ENCODE measurements at regions of chr12 and their contacts with region 1.

Region 1: GRCh38 chr12:31959161-31959700 is at the start of gene RESF1:
- DNase-seq: peak; percentile 90
- ATAC-seq: peak; percentile 82
- H3K4me3 Mint-ChIP-seq: peak within 1 kb of the TSS; percentile 88
- H3K27ac Mint-ChIP-seq: peak within 1 kb of the TSS; percentile 98
- H3K4me1 Mint-ChIP-seq: peaks cover 57% of the 10 kb centered on the region
- H3K27me3 Mint-ChIP-seq: no peaks in the 10 kb centered on the region
- CTCF ChIP-seq: no peak
- total RNA-seq, gene RESF1: 70.8 to 83.3 TPM

Region 2: GRCh38 chr12:31325877-31326631 is 633.2 kb before region 1 on chr12 and contains the start of gene SINHCAF:
- CTCF ChIA-PET with region 1: no interaction called
- POLR2A ChIA-PET with region 1: no interaction called
- intact Hi-C with region 1: loop called (anchors 10 kb)
- DNase-seq: peak; percentile 100
- ATAC-seq: peak; percentile 68
- H3K4me3 Mint-ChIP-seq: peak within 1 kb of the TSS; percentile 100
- H3K27ac Mint-ChIP-seq: peak within 1 kb of the TSS; percentile 99
- H3K4me1 Mint-ChIP-seq: peaks cover 23% of the 10 kb centered on the region
- H3K27me3 Mint-ChIP-seq: no peaks in the 10 kb centered on the region
- CTCF ChIP-seq: no peak
- total RNA-seq, gene SINHCAF: 171 to 184 TPM

Region 3: GRCh38 chr12:31651893-31652521 is 307.2 kb before region 1 on chr12:
- CTCF ChIA-PET with region 1: interaction called, 12 read pairs
- POLR2A ChIA-PET with region 1: no interaction called
- intact Hi-C with region 1: loop called (anchors 10 kb)
- DNase-seq: no peak
- ATAC-seq: no peak
- H3K4me3 Mint-ChIP-seq: peak overlapping the region; percentile 24
- H3K27ac Mint-ChIP-seq: no peak overlapping the region
- H3K4me1 Mint-ChIP-seq: peaks cover 12% of the 10 kb centered on the region
- H3K27me3 Mint-ChIP-seq: no peaks in the 10 kb centered on the region
- CTCF ChIP-seq: no peak

Region 4: GRCh38 chr12:31659087-31659933 is 299.9 kb before region 1 on chr12 and contains the start of gene ETFBKMT:
- CTCF ChIA-PET with region 1: interaction called, 12 read pairs
- POLR2A ChIA-PET with region 1: interaction called, 3 read pairs
- intact Hi-C with region 1: loop called (anchors 10 kb)
- DNase-seq: peak; percentile 97
- ATAC-seq: peak; percentile 99
- H3K4me3 Mint-ChIP-seq: peak within 1 kb of the TSS; percentile 92
- H3K27ac Mint-ChIP-seq: peak within 1 kb of the TSS; percentile 98
- H3K4me1 Mint-ChIP-seq: peaks cover 8% of the 10 kb centered on the region
- H3K27me3 Mint-ChIP-seq: no peaks in the 10 kb centered on the region
- CTCF ChIP-seq: no peak
- total RNA-seq, gene ETFBKMT: 0.99 to 1.1 TPM

Region 5: DNA sequence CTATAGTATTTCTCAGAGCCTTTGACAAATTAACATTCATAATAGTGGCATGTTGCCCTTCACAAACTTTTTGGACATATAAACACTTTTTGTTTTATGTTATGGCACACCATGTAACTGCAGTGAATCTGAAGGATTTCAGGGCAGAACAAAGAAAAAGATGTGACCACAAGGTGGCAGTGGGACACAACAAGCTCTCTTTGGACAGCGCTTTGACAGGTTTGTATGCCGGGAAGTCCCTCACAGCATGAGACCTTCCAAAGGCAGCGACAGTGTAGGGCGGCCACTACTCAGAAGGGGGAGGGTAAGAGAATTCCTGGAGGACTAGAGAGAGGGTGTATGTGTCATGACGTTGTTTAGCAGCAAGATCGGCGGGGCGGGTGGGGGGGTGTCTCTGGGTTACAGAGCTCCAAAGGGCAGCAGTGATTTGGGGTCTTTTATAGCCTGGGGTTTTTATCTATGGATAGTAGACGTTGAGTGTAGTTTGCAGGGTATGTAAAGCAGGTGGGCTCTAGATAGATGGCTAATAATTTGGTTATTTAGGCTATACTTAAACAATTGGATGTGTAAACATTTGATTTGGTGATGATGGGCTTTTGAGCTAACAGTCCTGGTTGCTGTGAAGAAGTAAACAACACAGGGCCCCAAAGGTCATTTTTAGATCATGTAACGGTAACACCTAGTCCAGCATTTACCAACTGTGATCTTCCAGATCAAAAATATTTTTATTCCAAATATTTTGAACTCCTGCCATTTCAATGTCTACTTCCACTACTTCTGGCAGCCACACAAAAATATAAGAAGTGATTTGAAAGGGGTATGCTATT is 276.9 kb before region 1 on chr12:
- CTCF ChIA-PET with region 1: interaction called, 17 read pairs
- POLR2A ChIA-PET with region 1: interaction called, 3 read pairs
- intact Hi-C with region 1: loop called (anchors 10 kb)
- DNase-seq: peak; percentile 79
- ATAC-seq: peak; percentile 92
- H3K4me3 Mint-ChIP-seq: no peak overlapping the region
- H3K27ac Mint-ChIP-seq: peak overlapping the region; percentile 82
- H3K4me1 Mint-ChIP-seq: peaks cover 12% of the 10 kb centered on the region
- H3K27me3 Mint-ChIP-seq: no peaks in the 10 kb centered on the region
- CTCF ChIP-seq: peak; percentile 73

Region 6: DNA sequence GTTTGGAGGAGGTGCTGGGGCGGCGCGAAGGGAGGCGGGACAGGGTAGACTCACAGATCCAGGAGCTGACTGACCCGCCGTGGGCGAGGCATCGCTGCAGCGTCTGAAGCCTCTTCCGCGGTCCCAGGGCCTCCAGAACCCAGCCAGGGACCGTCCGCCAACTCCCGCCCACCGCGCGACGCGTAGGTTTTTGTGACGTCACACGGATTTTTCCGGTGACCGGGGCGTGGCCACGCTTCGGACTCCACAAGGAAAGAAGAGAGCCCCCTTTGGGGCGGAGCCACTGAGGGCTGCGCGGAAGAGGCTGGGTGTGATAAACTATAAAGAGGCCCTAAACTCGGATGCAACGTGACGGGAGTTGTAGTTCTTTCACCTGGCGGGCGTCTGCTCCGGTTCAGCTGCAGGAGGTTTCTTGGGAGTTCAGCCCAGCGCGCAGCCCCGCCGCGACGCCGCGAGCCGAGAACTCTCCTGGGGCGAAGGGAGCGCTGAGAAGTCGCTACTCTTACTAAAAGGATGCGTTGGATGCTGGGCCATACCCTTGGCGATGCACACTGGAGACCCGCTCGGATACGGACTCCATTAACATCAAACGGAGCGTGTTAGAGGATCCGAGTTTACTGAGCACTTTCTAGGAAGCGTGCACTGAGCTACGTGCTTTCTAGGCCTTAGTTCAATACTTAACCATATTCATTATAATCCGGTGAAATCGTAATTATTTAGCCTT is 230.2 kb before region 1 on chr12 and contains the start of gene AMN1:
- CTCF ChIA-PET with region 1: no interaction called
- POLR2A ChIA-PET with region 1: interaction called, 10 read pairs
- intact Hi-C with region 1: loop called (anchors 5 kb)
- DNase-seq: peak; percentile 99
- ATAC-seq: peak; percentile 91
- H3K4me3 Mint-ChIP-seq: peak within 1 kb of the TSS; percentile 95
- H3K27ac Mint-ChIP-seq: peak within 1 kb of the TSS; percentile 99
- H3K4me1 Mint-ChIP-seq: peaks cover 60% of the 10 kb centered on the region
- H3K27me3 Mint-ChIP-seq: no peaks in the 10 kb centered on the region
- CTCF ChIP-seq: no peak
- total RNA-seq, gene AMN1: 3.5 to 4.1 TPM

Region 7: DNA sequence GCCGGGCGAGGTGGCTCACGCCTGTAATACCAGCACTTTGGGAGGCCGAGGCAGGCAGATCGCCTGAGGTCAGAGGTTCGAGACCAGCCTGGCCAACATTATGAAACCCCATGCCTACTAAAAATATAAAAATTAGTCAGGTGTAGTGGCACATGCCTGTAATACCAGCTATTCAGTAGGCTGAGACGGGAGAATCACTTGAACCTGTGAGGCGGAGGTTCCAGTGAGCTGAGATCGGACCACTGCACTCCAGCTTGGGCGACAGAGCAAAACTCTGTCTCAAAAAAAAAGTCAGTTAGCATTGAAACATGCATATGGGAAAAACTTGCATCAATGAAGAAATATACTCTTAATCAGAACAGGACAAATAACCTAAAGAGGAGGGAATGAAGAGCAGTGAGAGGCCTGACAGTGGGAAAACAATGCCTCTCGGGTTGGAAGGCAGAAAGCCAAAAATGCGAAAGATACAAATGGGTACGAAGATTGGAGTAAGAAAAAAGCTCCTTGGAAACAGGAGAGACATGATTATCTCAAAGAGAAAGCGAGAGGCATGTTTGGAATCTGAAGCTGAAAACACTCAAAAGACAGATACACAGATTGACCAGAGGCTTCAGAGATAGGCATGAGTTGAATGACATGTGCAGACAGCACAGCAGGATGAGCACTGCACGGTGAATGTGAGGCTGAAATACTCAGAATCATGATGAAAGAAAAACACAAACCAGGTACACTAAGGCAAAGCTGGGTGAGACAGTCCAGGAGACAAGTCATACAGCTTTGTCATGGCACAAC is 30.5 kb after region 1 on chr12:
- CTCF ChIA-PET with region 1: no interaction called
- POLR2A ChIA-PET with region 1: interaction called, 10 read pairs
- intact Hi-C with region 1: no loop called
- DNase-seq: peak; percentile 38
- ATAC-seq: peak; percentile 41
- H3K4me3 Mint-ChIP-seq: no peak overlapping the region
- H3K27ac Mint-ChIP-seq: peak overlapping the region; percentile 86
- H3K4me1 Mint-ChIP-seq: peaks cover 64% of the 10 kb centered on the region
- H3K27me3 Mint-ChIP-seq: no peaks in the 10 kb centered on the region
- CTCF ChIP-seq: no peak